ENCODE measurements at regions of chr20 and their contacts with region 1.

Region 1: DNA sequence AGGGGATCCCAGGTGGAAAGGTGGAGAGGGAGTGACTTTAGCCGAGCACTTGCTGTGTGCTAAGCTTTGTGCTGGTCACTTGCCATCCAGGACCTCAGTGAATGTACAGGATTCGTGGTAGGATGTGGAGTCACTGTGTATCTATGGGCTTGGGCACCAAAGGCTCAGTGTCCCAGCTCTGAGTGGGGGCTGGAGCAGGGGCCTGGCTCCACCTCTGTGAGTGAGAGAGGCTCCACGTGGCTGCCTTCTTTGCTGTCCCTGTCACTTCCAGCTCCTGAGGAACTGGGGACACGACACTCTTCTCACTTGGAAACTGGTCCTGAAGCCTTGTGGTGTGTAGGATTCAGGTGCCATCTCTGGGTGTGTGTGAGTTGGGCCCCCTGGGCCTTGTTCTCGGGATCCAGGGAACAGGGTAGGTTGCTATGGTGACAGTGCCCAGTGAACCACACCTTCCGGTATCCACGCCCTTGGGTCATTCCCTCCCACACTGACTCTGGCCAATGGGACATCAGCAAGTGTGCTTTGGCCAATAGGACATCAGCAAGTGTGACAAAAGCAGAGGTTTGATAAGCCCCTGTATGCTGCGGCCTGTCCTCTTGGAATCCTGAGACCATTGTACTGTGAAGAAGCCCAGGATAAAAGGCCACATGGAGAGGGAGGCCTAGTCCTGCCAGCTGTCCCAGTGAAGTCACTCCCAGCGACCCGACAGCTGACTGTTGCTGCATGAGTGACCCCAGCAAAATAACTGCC is 87.7 kb downstream of the CDH22 start:
- DNase-seq: no peak
- H3K4me3 ChIP-seq: no peak overlapping the region
- H3K27ac ChIP-seq: no peak overlapping the region
- H3K4me1 ChIP-seq: no peaks in the 10 kb centered on the region
- H3K27me3 ChIP-seq: no peaks in the 10 kb centered on the region
- CTCF ChIP-seq: no peak

Region 2: GRCh38 chr20:46260480-46260879 is 39.9 kb after region 1 on chr20:
- CTCF ChIA-PET with region 1: no interaction called
- dilution Hi-C with region 1: loop called (anchors 5 kb)
- in situ Hi-C with region 1: no loop called
- intact Hi-C with region 1: no loop called
- DNase-seq: peak; percentile 18
- H3K4me3 ChIP-seq: no peak overlapping the region
- H3K27ac ChIP-seq: no peak overlapping the region
- H3K4me1 ChIP-seq: peaks cover 9% of the 10 kb centered on the region
- H3K27me3 ChIP-seq: no peaks in the 10 kb centered on the region
- CTCF ChIP-seq: no peak